Naive thymus-derived CD4-positive, alpha-beta T cell (primary cell): ENCODE measurements at regions of chr9 and their contacts with region 1.

Region 1: GRCh38 chr9:96061293-96061987 is 185.9 kb downstream of the ERCC6L2 start:
- DNase-seq: peak in 8 of 9 donors; percentile 23 to 66 (median 50)
- ATAC-seq: peak; percentile 69
- H3K4me3 ChIP-seq: no peak overlapping the region
- H3K4me3 Mint-ChIP-seq: no peak overlapping the region
- H3K27ac ChIP-seq: no peak overlapping the region
- H3K27ac Mint-ChIP-seq: peak overlapping the region in 2 of 9 donors; percentile 63 to 73
- H3K4me1 ChIP-seq: no peaks in the 10 kb centered on the region
- H3K4me1 Mint-ChIP-seq: peaks cover 0 to 22% (median 6%) of the 10 kb centered on the region in 7 donors
- H3K27me3 ChIP-seq: no peaks in the 10 kb centered on the region
- H3K27me3 Mint-ChIP-seq: no peaks in the 10 kb centered on the region

Region 2: DNA sequence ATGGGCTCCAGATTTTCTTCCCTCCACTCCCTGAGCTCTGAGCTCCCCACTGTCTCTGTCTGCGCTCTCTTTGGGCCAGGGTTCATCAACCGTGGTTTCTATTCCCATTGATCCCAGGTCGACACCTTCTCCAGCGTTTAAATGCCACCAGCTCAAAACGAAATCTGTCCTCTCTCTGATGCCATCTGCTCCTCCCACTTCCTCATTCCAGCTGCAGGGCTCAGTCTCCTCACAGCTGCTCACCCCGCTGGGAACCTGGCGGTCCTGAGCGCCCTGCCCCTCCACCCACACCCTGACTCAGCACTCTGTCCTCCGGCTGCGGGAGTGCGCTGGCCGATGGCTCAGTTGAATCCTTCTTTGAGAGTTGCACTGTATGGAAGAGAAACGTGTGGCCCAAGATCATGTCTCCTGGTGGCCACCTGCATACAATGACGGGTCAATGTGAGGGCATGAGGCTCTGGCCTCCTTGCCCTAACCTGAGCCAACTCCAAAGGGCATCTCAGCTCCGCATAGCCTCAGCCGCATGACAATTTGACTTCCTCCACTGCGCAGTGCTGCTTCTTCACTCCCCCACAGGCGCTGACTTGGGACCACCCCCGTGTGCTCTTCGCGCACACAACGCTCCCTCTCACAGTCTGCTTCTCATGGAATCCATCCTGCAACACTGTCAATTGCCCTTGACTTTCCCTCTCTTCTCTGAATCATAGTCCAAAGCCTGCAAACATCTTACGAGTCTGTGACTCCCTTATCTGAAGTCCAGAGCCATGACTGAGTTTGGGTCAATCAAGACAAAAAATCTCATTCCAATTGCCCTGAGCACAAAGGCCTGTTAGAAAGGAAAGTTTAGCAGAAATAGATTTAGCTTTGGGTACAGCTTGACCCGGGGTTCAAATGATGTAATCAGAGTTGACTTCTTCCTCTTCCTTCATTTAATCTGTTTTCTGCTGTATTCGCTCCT is 627.0 kb before region 1 on chr9:
- CTCF ChIA-PET with region 1: no interaction called
- POLR2A ChIA-PET with region 1: no interaction called
- intact Hi-C with region 1: loop called in 1 of 2 experiments (anchors 1 kb)
- DNase-seq: no peak
- ATAC-seq: no peak
- H3K4me3 ChIP-seq: no peak overlapping the region
- H3K4me3 Mint-ChIP-seq: no peak overlapping the region
- H3K27ac ChIP-seq: no peak overlapping the region
- H3K27ac Mint-ChIP-seq: peak overlapping the region in 1 of 9 donors; percentile 47
- H3K4me1 ChIP-seq: no peaks in the 10 kb centered on the region
- H3K4me1 Mint-ChIP-seq: peaks cover 3 to 13% (median 11%) of the 10 kb centered on the region in 7 donors
- H3K27me3 ChIP-seq: no peaks in the 10 kb centered on the region
- H3K27me3 Mint-ChIP-seq: peaks cover 0 to 11% (median 0%) of the 10 kb centered on the region in 5 donors

Region 3: GRCh38 chr9:95494416-95495371 is 566.7 kb before region 1 on chr9:
- CTCF ChIA-PET with region 1: interaction called, 3 read pairs
- POLR2A ChIA-PET with region 1: no interaction called
- intact Hi-C with region 1: loop called in 1 of 2 experiments (anchors 1 kb)
- DNase-seq: peak; percentile 58 to 93 (median 90)
- ATAC-seq: peak; percentile 97
- H3K4me3 ChIP-seq: peak overlapping the region; percentile 67
- H3K4me3 Mint-ChIP-seq: peak overlapping the region; percentile 75 to 94 (median 89)
- H3K27ac ChIP-seq: peak overlapping the region; percentile 63
- H3K27ac Mint-ChIP-seq: peak overlapping the region; percentile 80 to 99 (median 94)
- H3K4me1 ChIP-seq: peaks cover 56 to 59% of the 10 kb centered on the region in 2 donors
- H3K4me1 Mint-ChIP-seq: peaks cover 34 to 81% (median 70%) of the 10 kb centered on the region in 7 donors
- H3K27me3 ChIP-seq: no peaks in the 10 kb centered on the region
- H3K27me3 Mint-ChIP-seq: peaks cover 0 to 42% (median 0%) of the 10 kb centered on the region in 5 donors

Region 4: GRCh38 chr9:95810135-95810534 is 251.3 kb before region 1 on chr9:
- CTCF ChIA-PET with region 1: interaction called, 3 read pairs
- POLR2A ChIA-PET with region 1: no interaction called
- intact Hi-C with region 1: loop called (anchors 1 to 10 kb)
- DNase-seq: no peak
- ATAC-seq: no peak
- H3K4me3 ChIP-seq: no peak overlapping the region
- H3K4me3 Mint-ChIP-seq: no peak overlapping the region
- H3K27ac ChIP-seq: no peak overlapping the region
- H3K27ac Mint-ChIP-seq: no peak overlapping the region
- H3K4me1 ChIP-seq: no peaks in the 10 kb centered on the region
- H3K4me1 Mint-ChIP-seq: peaks cover 2 to 16% (median 12%) of the 10 kb centered on the region in 7 donors
- H3K27me3 ChIP-seq: no peaks in the 10 kb centered on the region
- H3K27me3 Mint-ChIP-seq: peaks cover 0 to 15% (median 0%) of the 10 kb centered on the region in 5 donors

Region 5: DNA sequence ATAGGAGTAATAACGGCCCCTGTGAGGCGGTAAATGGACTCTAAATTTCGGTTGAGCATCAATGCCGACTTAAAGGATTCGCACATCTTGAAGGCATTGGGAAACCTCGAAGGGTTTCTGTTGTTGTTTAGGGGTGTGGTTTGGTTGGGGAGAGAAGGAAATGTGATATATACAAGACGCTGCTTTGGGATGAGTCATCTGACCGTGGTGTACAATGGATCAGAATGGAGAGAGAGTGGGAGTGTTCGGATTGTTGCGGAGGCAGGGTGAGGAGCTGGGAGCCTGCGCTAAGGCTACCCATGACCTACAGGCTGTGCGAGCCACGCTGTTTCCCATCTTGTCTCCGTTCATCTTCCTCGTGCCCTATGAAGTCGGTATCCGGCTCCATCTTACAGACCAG is 246.3 kb before region 1 on chr9:
- CTCF ChIA-PET with region 1: interaction called, 3 read pairs
- POLR2A ChIA-PET with region 1: no interaction called
- intact Hi-C with region 1: loop called (anchors 1 to 10 kb)
- DNase-seq: no peak
- ATAC-seq: no peak
- H3K4me3 ChIP-seq: no peak overlapping the region
- H3K4me3 Mint-ChIP-seq: no peak overlapping the region
- H3K27ac ChIP-seq: no peak overlapping the region
- H3K27ac Mint-ChIP-seq: no peak overlapping the region
- H3K4me1 ChIP-seq: no peaks in the 10 kb centered on the region
- H3K4me1 Mint-ChIP-seq: peaks cover 0 to 5% (median 0%) of the 10 kb centered on the region in 7 donors
- H3K27me3 ChIP-seq: no peaks in the 10 kb centered on the region
- H3K27me3 Mint-ChIP-seq: peaks cover 0 to 16% (median 0%) of the 10 kb centered on the region in 5 donors

Region 6: DNA sequence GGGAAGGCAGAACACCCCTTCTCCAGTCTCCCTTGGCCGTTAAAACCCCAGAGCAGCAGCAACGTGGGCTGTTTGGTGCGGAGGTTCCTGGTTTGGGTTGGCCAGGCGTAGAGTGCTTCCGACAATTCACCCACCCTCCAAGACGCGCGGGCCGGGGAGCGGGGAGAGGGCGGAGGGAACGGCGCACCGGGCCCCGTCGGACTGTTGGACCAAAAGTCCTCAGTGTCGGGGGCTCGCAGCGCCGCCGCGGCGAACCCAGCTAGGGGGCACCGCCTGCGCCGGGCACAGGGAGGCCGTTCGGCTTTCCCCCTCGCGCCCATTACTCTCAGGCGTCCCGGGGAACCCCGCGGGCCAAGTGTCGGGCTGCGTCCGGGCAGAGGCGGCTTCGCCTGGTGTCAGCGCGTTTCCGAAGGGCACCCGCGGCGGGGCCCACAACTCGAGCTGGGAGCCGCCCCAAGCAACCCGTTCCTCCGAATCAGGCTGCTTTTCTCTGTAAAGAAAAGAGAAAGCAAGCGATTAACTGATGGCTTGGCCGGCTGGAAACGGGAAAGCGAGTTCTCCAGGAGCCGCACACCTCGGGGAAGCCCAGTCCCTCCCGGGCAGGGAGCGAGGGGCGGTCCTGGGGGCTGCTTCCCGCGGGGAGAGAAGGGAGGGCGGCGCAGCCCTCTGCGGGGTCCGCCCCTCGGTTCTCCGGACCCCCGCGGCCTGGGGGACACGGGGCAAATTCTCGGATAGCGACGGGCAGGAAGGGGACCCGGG is 40.5 kb before region 1 on chr9:
- CTCF ChIA-PET with region 1: no interaction called
- POLR2A ChIA-PET with region 1: no interaction called
- intact Hi-C with region 1: loop called in 1 of 2 experiments (anchors 2 kb)
- DNase-seq: peak in 8 of 9 donors; percentile 35 to 70 (median 44)
- ATAC-seq: peak; percentile 70
- H3K4me3 ChIP-seq: peak overlapping the region; percentile 61
- H3K4me3 Mint-ChIP-seq: peak overlapping the region; percentile 71 to 91 (median 86)
- H3K27ac ChIP-seq: peak overlapping the region; percentile 72
- H3K27ac Mint-ChIP-seq: peak overlapping the region; percentile 28 to 97 (median 70)
- H3K4me1 ChIP-seq: peaks cover 27 to 34% of the 10 kb centered on the region in 2 donors
- H3K4me1 Mint-ChIP-seq: peaks cover 47 to 74% (median 63%) of the 10 kb centered on the region in 7 donors
- H3K27me3 ChIP-seq: no peaks in the 10 kb centered on the region
- H3K27me3 Mint-ChIP-seq: peaks cover 0 to 31% (median 5%) of the 10 kb centered on the region in 5 donors

Region 7: DNA sequence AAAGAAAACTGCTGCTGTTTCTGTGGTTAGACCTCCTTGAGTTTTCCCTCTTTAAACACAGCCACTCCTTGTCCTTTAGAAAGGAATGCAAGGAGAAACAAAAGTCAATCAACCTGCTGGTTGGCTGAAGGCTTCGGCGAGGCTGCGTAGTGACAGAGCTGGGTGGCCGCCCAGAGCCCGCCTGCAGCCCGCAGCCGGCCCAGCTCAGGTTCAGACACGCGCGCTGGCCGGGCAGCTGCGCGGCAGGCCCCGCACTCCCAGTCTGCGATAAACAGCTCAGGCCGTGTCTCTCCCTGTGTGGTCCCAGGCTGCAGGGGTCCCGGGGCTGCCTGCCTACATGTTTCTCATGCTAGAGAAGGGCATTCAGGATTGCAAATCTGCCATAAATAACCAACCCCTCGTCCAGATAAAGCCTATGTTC is 125.2 kb after region 1 on chr9:
- CTCF ChIA-PET with region 1: no interaction called
- POLR2A ChIA-PET with region 1: no interaction called
- intact Hi-C with region 1: no loop called
- DNase-seq: no peak
- ATAC-seq: no peak
- H3K4me3 ChIP-seq: no peak overlapping the region
- H3K4me3 Mint-ChIP-seq: no peak overlapping the region
- H3K27ac ChIP-seq: no peak overlapping the region
- H3K27ac Mint-ChIP-seq: no peak overlapping the region
- H3K4me1 ChIP-seq: no peaks in the 10 kb centered on the region
- H3K4me1 Mint-ChIP-seq: no peaks in the 10 kb centered on the region
- H3K27me3 ChIP-seq: no peaks in the 10 kb centered on the region
- H3K27me3 Mint-ChIP-seq: peaks cover 3 to 38% (median 27%) of the 10 kb centered on the region in 5 donors